ENCODE measurements at regions of chr2 and their contacts with region 1.

Region 1: DNA sequence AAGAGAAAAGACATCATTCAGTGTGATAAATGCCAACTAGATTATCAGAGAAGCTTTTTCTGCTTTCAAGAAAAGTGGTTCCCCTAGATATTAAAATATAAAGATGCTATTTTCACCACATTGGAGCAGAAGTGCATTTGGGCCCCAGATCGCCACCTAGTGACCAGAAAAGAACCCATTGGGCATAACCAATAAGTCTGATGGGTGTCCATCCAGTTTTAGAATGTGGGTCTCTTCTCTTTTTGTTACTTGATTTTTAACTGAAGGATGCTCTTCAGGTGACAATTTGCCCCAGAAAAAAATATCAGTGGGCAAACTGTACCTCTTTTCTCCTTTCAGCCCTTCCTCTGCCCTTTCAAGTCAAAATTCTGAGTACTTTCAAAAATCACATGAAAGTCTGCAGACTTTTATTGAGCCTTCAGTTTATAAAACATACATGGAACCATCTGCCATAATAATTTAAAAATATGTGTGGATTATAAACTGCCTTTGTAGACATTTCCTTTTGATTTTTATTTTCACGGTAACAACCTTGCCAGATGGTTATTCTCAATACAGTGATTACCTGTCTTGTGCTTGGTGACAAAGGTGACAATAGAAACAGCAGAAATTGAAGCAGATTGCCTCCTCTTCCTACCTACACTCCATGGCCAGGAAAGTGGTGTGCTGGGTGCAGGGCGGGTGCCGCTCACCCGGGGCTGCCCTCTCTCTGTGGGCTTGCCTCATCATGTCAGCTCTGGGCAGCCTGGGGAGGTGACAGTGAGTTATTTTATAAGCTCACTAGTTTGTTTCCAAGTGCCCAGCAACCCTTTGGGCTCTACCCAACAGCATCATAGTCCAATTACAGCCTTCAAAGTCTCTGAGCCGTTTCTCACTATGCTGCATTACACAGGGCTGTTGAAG is 124.5 kb downstream of the DCDC2C start:
- DNase-seq: peak; percentile 34
- H3K4me3 Mint-ChIP-seq: no peak overlapping the region
- H3K27ac Mint-ChIP-seq: no peak overlapping the region
- H3K4me1 Mint-ChIP-seq: no peaks in the 10 kb centered on the region
- H3K27me3 Mint-ChIP-seq: peaks cover 4% of the 10 kb centered on the region

Region 2: GRCh38 chr2:3728104-3729054 is 99.5 kb before region 1 on chr2:
- CTCF ChIA-PET with region 1: interaction called, 8 read pairs
- intact Hi-C with region 1: loop called (anchors 5 kb)
- DNase-seq: no peak
- H3K4me3 Mint-ChIP-seq: no peak overlapping the region
- H3K27ac Mint-ChIP-seq: no peak overlapping the region
- H3K4me1 Mint-ChIP-seq: no peaks in the 10 kb centered on the region
- H3K27me3 Mint-ChIP-seq: peaks cover 10% of the 10 kb centered on the region

Region 3: DNA sequence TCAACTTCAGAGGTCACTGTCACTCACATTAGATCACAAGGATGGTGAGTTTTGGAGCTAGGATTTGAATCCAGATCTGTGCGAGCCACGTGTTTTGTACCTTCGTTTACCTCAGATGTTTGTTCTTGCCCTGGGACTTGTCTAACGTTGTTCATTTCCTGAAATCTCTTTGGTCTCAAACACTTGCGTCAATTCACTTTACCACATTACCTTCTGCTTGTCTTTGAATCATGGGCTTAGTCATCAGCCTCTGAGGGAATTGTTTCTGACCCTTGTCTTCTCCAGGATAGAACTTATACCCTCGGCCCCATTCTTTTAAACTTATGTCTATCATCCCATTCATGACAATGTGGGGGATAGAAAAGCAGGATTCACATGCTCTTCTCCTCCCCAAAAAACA is 158.1 kb after region 1 on chr2:
- CTCF ChIA-PET with region 1: no interaction called
- intact Hi-C with region 1: no loop called
- DNase-seq: no peak
- H3K4me3 Mint-ChIP-seq: no peak overlapping the region
- H3K27ac Mint-ChIP-seq: no peak overlapping the region
- H3K4me1 Mint-ChIP-seq: no peaks in the 10 kb centered on the region
- H3K27me3 Mint-ChIP-seq: no peaks in the 10 kb centered on the region